ENCODE measurements at regions of chr6 and their contacts with region 1.

Region 1: DNA sequence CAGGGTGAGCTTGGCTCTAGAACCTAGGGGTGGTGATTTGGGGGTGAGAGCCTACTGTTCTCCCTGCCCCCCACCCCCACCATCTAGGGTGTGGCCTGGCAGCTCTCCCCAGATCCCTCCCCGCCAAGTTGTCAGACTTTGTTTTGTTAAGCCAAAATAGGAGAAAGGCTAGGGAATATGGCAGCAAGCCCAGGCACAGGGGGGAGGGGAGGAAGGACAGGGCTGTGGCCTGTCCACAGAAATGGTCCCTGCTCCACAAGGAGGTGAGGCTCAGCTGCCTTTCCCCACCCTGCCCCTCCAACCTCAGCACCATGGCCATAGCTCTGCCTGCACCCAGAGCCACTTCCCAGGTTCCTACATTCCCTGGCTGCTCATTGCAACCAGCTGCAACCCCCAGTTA is 17.2 kb downstream of the SCUBE3 start:
- DNase-seq: no peak
- H3K4me3 Mint-ChIP-seq: no peak overlapping the region
- H3K27ac Mint-ChIP-seq: no peak overlapping the region
- H3K4me1 Mint-ChIP-seq: no peaks in the 10 kb centered on the region
- H3K27me3 Mint-ChIP-seq: no peaks in the 10 kb centered on the region

Region 2: DNA sequence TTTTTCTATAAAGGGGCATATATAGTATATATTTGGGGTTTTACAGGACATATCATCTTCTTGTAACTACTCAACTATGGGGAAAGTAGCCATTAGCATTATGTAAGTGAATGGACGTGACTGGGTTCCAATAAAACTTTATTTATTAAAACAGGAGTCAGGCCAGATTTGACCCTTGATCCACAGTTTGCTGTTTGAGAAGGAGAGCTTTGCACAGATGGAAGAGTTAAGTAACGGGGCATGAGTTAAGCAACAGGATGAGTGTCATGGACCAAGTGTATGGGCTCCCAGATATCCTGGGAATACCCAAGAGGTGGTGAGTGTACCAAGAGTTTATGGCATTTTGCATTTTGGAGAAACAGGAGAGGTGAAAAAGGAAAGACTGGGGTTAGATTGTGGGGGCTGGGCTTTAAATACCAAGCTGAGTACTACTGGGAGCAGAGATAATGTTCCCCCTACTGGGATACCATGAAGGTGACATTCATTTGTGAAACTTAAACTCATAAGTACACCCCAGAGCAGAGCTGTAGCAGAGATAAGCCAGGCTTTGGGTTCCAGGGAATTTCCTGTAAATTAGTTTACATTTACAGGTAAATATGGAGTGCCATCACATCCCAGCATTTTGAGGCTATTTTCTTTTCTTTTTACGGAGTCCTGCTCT is 35.7 kb before region 1 on chr6:
- CTCF ChIA-PET with region 1: no interaction called
- POLR2A ChIA-PET with region 1: no interaction called
- DNase-seq: no peak
- H3K4me3 Mint-ChIP-seq: no peak overlapping the region
- H3K27ac Mint-ChIP-seq: no peak overlapping the region
- H3K4me1 Mint-ChIP-seq: no peaks in the 10 kb centered on the region
- H3K27me3 Mint-ChIP-seq: peaks cover 23% of the 10 kb centered on the region

Region 3: DNA sequence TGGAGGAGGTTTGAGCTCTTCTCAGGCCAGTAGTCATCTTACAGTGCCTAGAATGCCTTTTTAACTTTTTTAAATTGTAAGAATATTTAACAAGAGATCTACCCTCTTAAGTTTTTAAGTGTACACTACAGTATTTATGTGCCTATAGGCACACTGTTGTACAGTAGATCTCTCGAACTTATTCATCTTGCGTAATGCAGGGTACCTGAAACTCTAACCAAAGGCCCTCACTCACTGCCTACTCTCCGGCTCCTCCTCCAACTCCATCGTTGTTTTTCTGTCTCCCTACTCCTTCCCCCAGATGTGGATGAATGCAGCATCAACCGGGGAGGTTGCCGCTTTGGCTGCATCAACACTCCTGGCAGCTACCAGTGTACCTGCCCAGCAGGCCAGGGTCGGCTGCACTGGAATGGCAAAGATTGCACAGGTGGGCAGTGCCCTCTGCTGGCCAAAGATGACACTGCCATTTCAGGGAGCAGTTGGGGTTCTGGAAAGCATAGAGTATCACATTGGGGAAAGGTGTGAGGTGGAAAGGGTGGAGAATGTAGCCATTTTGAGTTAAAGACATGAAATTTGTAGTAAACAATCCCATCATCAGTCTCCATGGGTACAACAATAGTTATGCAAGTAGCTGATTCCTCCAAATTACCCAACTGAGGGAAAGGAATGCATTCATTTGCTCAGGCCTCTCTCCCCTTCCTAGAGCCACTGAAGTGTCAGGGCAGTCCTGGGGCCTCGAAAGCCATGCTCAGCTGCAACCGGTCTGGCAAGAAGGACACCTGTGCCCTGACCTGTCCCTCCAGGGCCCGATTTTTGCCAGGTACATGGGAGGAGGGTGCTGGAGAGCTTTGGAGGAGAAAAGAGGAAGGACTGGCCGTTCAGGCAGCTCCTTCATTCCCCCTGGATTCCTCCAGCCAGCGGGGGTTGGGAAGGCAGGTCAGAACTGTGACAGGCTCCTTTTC is 10.2 kb after region 1 on chr6:
- CTCF ChIA-PET with region 1: interaction called, 21 read pairs
- POLR2A ChIA-PET with region 1: no interaction called
- DNase-seq: peak; percentile 76
- H3K4me3 Mint-ChIP-seq: no peak overlapping the region
- H3K27ac Mint-ChIP-seq: peak overlapping the region; percentile 50
- H3K4me1 Mint-ChIP-seq: peaks cover 8% of the 10 kb centered on the region
- H3K27me3 Mint-ChIP-seq: no peaks in the 10 kb centered on the region

Measured in activated CD4-positive, alpha-beta T cell treated with anti-CD3 and anti-CD28 coated beads, Interleukin-2, amount 10 ng/mL, durations not matched to agents 7 days and 5 days (primary cell).